ENCODE measurements at regions of chr17 and their contacts with region 1.

Region 1: GRCh38 chr17:38584350-38584925 is 21.3 kb downstream of the SRCIN1 start:
- DNase-seq: peak in 1 of 2 donors; percentile 53
- ATAC-seq: peak; percentile 67 to 88 (median 78)
- H3K4me3 ChIP-seq: no peak overlapping the region
- H3K27ac ChIP-seq: no peak overlapping the region
- H3K4me1 ChIP-seq: peaks cover 0 to 11% (median 4%) of the 10 kb centered on the region in 9 donors
- H3K27me3 ChIP-seq: peaks cover 0 to 99% (median 63%) of the 10 kb centered on the region in 7 donors
- CTCF ChIP-seq: peak; percentile 69 to 97 (median 92)

Region 2: GRCh38 chr17:37221865-37222264 is 1362.6 kb before region 1 on chr17:
- intact Hi-C with region 1: no loop called
- DNase-seq: no peak
- ATAC-seq: no peak
- H3K4me3 ChIP-seq: no peak overlapping the region
- H3K27ac ChIP-seq: no peak overlapping the region
- H3K4me1 ChIP-seq: no peaks in the 10 kb centered on the region
- H3K27me3 ChIP-seq: no peaks in the 10 kb centered on the region
- CTCF ChIP-seq: no peak

Region 3: GRCh38 chr17:38421171-38421841 is 163.1 kb before region 1 on chr17:
- intact Hi-C with region 1: loop called in 1 of 10 experiments (anchors 5 kb)
- DNase-seq: no peak
- ATAC-seq: peak in 6 of 8 donors; percentile 7 to 50 (median 19)
- H3K4me3 ChIP-seq: peak overlapping the region in 1 of 10 donors; percentile 10
- H3K27ac ChIP-seq: peak overlapping the region in 7 of 10 donors; percentile 15 to 90 (median 71)
- H3K4me1 ChIP-seq: peaks cover 10 to 63% (median 48%) of the 10 kb centered on the region in 9 donors
- H3K27me3 ChIP-seq: peaks cover 0 to 56% (median 23%) of the 10 kb centered on the region in 7 donors
- CTCF ChIP-seq: no peak

Region 4: GRCh38 chr17:38557836-38558727 is 26.4 kb before region 1 on chr17:
- intact Hi-C with region 1: loop called in 1 of 10 experiments (anchors 1 kb)
- DNase-seq: peak; percentile 89 to 93
- ATAC-seq: peak; percentile 87 to 96 (median 94)
- H3K4me3 ChIP-seq: peak overlapping the region; percentile 0 to 57 (median 42)
- H3K27ac ChIP-seq: no peak overlapping the region
- H3K4me1 ChIP-seq: peaks cover 20 to 39% (median 33%) of the 10 kb centered on the region in 9 donors
- H3K27me3 ChIP-seq: peaks cover 30 to 64% (median 47%) of the 10 kb centered on the region in 7 donors
- CTCF ChIP-seq: peak; percentile 84 to 98 (median 90)

Region 5: GRCh38 chr17:38628441-38628840 is 44.0 kb after region 1 on chr17:
- intact Hi-C with region 1: no loop called
- DNase-seq: no peak
- ATAC-seq: no peak
- H3K4me3 ChIP-seq: no peak overlapping the region
- H3K27ac ChIP-seq: no peak overlapping the region
- H3K4me1 ChIP-seq: no peaks in the 10 kb centered on the region
- H3K27me3 ChIP-seq: peaks cover 0 to 21% (median 8%) of the 10 kb centered on the region in 7 donors
- CTCF ChIP-seq: no peak

Measured in heart right ventricle (tissue), 16 donors.